ENCODE measurements at regions of chr14 and their contacts with region 1.

Region 1: DNA sequence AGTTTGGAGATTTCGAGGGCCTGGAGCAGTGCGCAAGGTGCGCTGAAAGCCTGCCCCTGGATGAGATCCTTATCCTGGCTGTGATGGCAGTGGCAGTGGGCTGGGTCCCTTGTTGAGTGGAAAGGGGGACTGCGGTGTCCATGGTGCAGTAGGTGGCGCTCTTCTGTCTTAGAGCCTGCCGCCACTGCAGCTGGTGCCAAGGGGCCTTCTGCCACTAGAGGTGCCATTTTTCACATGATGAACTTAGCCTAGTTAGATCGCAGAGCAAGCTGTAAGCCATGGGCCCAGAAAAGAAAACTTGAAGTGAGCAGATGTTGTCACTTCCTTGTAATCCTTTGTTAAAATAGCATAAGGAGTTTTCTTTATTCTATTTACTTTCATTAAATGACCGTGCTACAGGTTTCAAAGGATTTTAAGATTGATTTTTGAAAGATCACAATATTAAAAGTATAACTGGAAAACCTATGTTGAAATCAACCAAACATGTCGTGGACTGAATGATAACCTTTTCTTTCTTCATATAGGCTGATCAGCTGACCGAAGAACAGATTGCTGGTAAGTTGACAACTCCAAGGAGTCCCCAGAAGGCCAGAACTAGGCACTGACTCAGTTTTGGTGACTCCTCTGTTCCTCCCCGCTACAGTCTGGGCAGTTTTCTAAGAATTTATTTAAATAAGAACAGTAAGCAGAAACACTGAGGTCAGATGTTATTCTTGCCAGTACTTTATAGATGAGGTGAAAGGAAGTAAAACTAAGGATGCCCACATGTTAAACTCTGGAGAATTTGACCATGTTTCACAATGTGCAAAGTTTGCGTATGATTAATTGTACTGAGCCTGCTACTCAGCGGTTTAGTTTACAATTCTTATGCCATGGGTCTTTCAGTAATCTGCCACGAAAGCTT is 3.0 kb downstream of the CALM1 start:
- DNase-seq: peak; percentile 89
- H3K4me3 ChIP-seq: peak overlapping the region; percentile 86 to 99; a peak in 3 of 4 replicates
- H3K27ac ChIP-seq: peak overlapping the region in 1 of 2 experiments; percentile 86; a peak in 3 of 4 replicates
- H3K4me1 ChIP-seq: peaks cover 4 to 26% of the 10 kb centered on the region in 2 experiments; a peak in 3 of 4 replicates
- H3K27me3 ChIP-seq: no peaks in the 10 kb centered on the region
- CTCF ChIP-seq: peak; percentile 100
- EP300 ChIP-seq: peak in 1 of 2 experiments; percentile 26; a peak in 1 of 4 replicates
- RAD21 ChIP-seq: peak; percentile 99

Region 2: GRCh38 chr14:89736867-89737266 is 662.9 kb before region 1 on chr14:
- CTCF ChIA-PET with region 1: no interaction called
- POLR2A ChIA-PET with region 1: no interaction called
- DNase-seq: no peak
- H3K4me3 ChIP-seq: no peak overlapping the region
- H3K27ac ChIP-seq: no peak overlapping the region
- H3K4me1 ChIP-seq: no peaks in the 10 kb centered on the region
- H3K27me3 ChIP-seq: no peaks in the 10 kb centered on the region
- CTCF ChIP-seq: no peak
- EP300 ChIP-seq: no peak
- RAD21 ChIP-seq: no peak

Region 3: GRCh38 chr14:90383075-90383730 is 16.6 kb before region 1 on chr14:
- CTCF ChIA-PET with region 1: interaction called, 10 read pairs
- POLR2A ChIA-PET with region 1: interaction called, 36 read pairs
- DNase-seq: peak; percentile 95
- H3K4me3 ChIP-seq: peak overlapping the region; percentile 70 to 80
- H3K27ac ChIP-seq: peak overlapping the region; percentile 96 to 99
- H3K4me1 ChIP-seq: peaks cover 16 to 23% of the 10 kb centered on the region in 2 experiments; a peak in 2 of 4 replicates
- H3K27me3 ChIP-seq: no peaks in the 10 kb centered on the region
- CTCF ChIP-seq: no peak
- EP300 ChIP-seq: peak; percentile 5 to 46; a peak in 2 of 4 replicates
- RAD21 ChIP-seq: no peak

Region 4: DNA sequence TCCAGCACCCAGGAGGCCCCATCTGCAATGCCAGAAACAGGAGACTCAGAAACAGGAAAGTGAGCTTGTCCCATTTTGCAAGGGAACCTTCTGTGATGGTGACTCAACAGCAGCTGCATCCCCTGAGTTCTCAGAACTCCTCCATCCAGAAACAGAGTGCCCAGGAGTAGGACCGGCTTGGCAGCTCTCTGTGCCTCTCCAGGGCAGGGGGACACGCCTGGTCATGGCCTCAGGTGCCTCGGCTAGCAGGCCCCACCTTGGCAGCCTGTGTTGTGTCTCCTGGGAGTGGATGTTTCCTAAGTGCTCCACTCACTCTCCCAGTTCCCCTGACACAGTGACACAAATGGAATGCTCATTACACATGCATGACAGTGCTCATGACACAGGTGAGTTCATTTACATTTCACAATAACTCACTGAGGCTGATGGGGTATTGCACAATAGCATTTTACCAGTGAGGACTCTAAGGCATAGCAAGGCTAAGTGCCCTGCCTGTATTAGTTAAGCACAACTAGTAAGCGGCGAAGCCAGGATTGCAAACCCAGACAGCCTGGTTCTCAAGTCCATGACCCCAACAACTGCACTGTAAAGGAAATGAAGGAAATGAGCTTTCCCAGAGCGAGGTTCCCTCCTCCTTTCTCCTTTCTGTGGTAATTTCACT is 44.4 kb after region 1 on chr14:
- CTCF ChIA-PET with region 1: interaction called, 31 read pairs
- POLR2A ChIA-PET with region 1: interaction called, 3 read pairs
- DNase-seq: no peak
- H3K4me3 ChIP-seq: no peak overlapping the region
- H3K27ac ChIP-seq: no peak overlapping the region; a peak in 1 of 4 replicates
- H3K4me1 ChIP-seq: peaks cover 0 to 30% of the 10 kb centered on the region in 2 experiments; a peak in 2 of 4 replicates
- H3K27me3 ChIP-seq: no peaks in the 10 kb centered on the region
- CTCF ChIP-seq: no peak
- EP300 ChIP-seq: no peak
- RAD21 ChIP-seq: no peak

Region 5: DNA sequence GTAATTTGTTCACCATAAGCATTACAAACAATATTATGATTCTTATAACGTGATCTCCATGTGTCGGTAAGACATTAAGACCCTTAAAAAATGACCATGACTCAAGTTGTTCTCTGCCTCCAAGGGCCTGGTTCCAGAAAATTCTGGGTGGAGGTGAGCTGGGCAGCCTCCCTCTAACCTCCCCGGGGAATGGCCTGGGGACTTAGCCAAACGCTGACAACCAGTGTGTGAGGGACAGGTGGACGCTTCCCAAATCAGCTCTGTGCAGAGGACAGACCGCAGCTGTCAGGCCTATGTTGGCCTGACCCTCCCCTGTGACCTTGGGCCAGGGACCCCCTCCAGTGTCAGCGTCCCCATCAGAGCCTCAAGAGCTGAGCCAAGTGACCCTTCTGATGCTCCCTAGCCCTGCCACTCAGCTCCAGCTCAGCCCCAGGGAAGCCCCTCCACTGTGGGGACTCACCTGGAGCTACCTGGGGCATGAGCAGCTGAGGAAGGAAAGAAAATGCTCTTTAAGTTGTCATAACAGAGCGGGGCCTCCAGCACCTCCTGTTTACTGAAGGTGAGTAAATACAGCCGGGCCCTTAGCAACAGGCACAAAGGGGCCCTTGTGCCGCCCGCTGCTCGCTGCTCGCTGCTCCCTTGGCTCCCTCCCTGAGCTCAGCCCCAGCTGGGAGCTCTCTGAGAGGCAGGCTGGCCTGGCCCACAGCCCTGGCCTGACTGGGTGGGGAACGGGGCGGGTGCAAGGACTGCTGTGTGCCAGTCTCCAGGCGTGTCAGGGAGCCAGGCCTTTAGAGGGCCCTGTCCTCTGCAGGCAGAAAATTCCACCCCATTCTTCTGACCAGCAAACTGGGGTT is 113.6 kb after region 1 on chr14:
- CTCF ChIA-PET with region 1: interaction called, 14 read pairs
- POLR2A ChIA-PET with region 1: interaction called, 4 read pairs
- DNase-seq: no peak
- H3K4me3 ChIP-seq: no peak overlapping the region
- H3K27ac ChIP-seq: no peak overlapping the region
- H3K4me1 ChIP-seq: peaks cover 0 to 26% of the 10 kb centered on the region in 2 experiments; a peak in 1 of 4 replicates
- H3K27me3 ChIP-seq: no peaks in the 10 kb centered on the region
- CTCF ChIP-seq: no peak
- EP300 ChIP-seq: no peak
- RAD21 ChIP-seq: no peak

Region 6: DNA sequence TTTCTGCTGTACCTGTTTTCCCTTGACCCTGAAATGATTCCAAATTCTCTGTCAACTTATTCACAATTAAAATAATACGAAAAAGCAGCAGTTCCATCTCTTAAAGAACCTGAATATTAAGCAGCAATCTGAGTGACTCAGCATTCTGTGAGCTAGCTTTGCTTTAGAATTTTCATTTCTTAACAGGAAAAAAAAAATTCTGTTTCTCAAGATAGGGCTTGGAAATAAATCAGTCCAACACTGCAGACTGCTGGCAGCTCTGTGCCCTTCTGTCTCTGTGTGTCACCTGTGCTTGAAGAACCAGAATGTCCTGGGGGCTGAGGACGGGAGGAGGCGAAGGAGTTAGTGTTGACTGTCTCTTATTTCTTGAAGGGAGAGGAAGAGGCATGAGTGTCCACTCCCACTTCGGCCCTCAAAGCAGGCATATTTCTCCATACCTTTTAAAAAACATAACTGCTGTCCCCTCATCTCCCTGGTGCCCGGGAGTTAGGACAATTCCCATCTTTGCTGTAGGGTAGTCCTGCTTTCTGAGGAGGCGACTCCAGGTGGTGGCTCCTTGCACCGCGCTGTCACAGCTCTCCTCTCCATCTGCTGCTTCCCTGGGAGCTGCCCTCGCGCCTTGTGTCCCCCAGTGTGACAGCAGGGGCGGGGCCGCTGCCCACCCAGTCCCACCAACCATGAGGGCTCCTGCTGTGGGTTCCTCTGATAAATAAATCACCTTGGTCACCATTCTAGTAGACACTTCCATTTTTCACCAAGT is 200.1 kb after region 1 on chr14:
- CTCF ChIA-PET with region 1: interaction called, 11 read pairs
- POLR2A ChIA-PET with region 1: no interaction called
- DNase-seq: no peak
- H3K4me3 ChIP-seq: no peak overlapping the region
- H3K27ac ChIP-seq: no peak overlapping the region; a peak in 1 of 4 replicates
- H3K4me1 ChIP-seq: peaks cover 11 to 12% of the 10 kb centered on the region in 2 experiments; a peak in 3 of 4 replicates
- H3K27me3 ChIP-seq: no peaks in the 10 kb centered on the region
- CTCF ChIP-seq: peak; percentile 27
- EP300 ChIP-seq: no peak
- RAD21 ChIP-seq: peak; percentile 52

Region 7: GRCh38 chr14:90697577-90698206 is 297.9 kb after region 1 on chr14:
- CTCF ChIA-PET with region 1: interaction called, 146 read pairs
- POLR2A ChIA-PET with region 1: interaction called, 5 read pairs
- DNase-seq: peak; percentile 80
- H3K4me3 ChIP-seq: peak overlapping the region in 1 of 2 experiments; percentile 48; a peak in 1 of 4 replicates
- H3K27ac ChIP-seq: peak overlapping the region in 1 of 2 experiments; percentile 65; a peak in 3 of 4 replicates
- H3K4me1 ChIP-seq: peaks cover 21 to 28% of the 10 kb centered on the region in 2 experiments; a peak in 3 of 4 replicates
- H3K27me3 ChIP-seq: no peaks in the 10 kb centered on the region
- CTCF ChIP-seq: peak; percentile 96
- EP300 ChIP-seq: no peak
- RAD21 ChIP-seq: peak; percentile 97

Measured in SK-N-SH (cell line).